ENCODE measurements at regions of chr2 and their contacts with region 1.

Region 1: DNA sequence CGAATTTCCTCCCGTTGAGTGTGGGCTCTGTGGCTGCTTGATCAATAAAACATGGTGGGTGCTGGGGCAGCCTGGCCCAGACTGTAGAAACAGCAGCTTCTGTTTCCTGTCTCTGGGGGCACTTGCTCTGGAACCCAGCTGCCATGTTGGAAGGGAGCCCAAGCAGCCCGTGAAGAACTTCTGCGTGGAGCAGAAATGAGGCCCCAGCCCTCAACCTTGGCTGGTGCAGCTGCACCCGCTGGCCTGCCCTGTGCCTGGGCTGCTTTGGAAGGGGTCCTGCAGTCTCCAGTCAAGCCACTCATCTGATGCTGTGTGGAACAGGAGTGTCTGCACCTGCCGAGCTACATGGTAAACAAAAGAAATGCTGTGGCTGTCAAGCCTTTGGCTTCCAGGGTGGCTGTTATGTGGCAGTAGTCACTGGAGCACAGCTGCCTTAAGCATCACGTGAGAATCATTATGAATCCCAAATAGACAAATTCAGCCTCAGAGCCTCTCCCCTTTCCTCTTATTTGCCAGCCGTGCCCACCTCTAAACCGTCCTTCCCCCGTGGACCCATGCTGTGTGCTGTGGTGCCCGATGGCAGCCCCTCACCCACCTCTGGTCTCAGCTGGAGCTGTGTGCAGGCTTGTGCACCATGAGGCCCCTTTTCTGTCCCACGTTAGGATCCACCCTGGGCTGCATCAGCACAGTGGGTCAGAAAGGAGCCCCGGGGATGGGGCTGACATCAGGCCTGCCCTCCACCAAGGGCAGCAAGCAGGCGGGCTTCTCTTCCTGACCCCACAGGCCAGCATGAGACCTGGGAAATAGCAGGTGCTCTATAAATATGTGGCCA is 134.0 kb upstream of the HDAC4 start:
- DNase-seq: no peak
- ATAC-seq: no peak
- H3K4me3 ChIP-seq: no peak overlapping the region
- H3K27ac ChIP-seq: no peak overlapping the region
- H3K4me1 ChIP-seq: peaks cover 17 to 20% of the 10 kb centered on the region in 2 donors
- H3K27me3 ChIP-seq: no peaks in the 10 kb centered on the region
- CTCF ChIP-seq: no peak
- POLR2A ChIP-seq: no peak

Region 2: GRCh38 chr2:239522002-239522738 is 12.6 kb before region 1 on chr2:
- in situ Hi-C with region 1: no loop called
- intact Hi-C with region 1: loop called (anchors 1 kb)
- DNase-seq: peak; percentile 73 to 78
- ATAC-seq: peak; percentile 89 to 94
- H3K4me3 ChIP-seq: no peak overlapping the region
- H3K27ac ChIP-seq: peak overlapping the region; percentile 25 to 76 (median 60)
- H3K4me1 ChIP-seq: peaks cover 11 to 12% of the 10 kb centered on the region in 2 donors
- H3K27me3 ChIP-seq: no peaks in the 10 kb centered on the region
- CTCF ChIP-seq: no peak
- POLR2A ChIP-seq: no peak

Region 3: GRCh38 chr2:239690651-239691631 is 156.1 kb after region 1 on chr2:
- in situ Hi-C with region 1: no loop called
- intact Hi-C with region 1: loop called (anchors 5 kb)
- DNase-seq: peak; percentile 68
- ATAC-seq: peak; percentile 72 to 73
- H3K4me3 ChIP-seq: peak overlapping the region in 2 of 4 donors; percentile 0 to 25
- H3K27ac ChIP-seq: peak overlapping the region; percentile 75 to 83 (median 81)
- H3K4me1 ChIP-seq: peaks cover 33 to 41% of the 10 kb centered on the region in 2 donors
- H3K27me3 ChIP-seq: no peaks in the 10 kb centered on the region
- CTCF ChIP-seq: peak in 2 of 5 experiments; percentile 21 to 22
- POLR2A ChIP-seq: peak in 1 of 2 donors; percentile 63

Region 4: GRCh38 chr2:239801404-239802184 is 266.8 kb after region 1 on chr2:
- in situ Hi-C with region 1: no loop called
- intact Hi-C with region 1: no loop called
- DNase-seq: no peak
- ATAC-seq: no peak
- H3K4me3 ChIP-seq: no peak overlapping the region
- H3K27ac ChIP-seq: no peak overlapping the region
- H3K4me1 ChIP-seq: no peaks in the 10 kb centered on the region
- H3K27me3 ChIP-seq: peaks cover 0 to 3% (median 2%) of the 10 kb centered on the region in 3 donors
- CTCF ChIP-seq: no peak
- POLR2A ChIP-seq: no peak

Measured in gastrocnemius medialis (tissue), 4 donors.